Caco-2 (cell line): ENCODE measurements at regions of chr10 and their contacts with region 1.

Region 1: DNA sequence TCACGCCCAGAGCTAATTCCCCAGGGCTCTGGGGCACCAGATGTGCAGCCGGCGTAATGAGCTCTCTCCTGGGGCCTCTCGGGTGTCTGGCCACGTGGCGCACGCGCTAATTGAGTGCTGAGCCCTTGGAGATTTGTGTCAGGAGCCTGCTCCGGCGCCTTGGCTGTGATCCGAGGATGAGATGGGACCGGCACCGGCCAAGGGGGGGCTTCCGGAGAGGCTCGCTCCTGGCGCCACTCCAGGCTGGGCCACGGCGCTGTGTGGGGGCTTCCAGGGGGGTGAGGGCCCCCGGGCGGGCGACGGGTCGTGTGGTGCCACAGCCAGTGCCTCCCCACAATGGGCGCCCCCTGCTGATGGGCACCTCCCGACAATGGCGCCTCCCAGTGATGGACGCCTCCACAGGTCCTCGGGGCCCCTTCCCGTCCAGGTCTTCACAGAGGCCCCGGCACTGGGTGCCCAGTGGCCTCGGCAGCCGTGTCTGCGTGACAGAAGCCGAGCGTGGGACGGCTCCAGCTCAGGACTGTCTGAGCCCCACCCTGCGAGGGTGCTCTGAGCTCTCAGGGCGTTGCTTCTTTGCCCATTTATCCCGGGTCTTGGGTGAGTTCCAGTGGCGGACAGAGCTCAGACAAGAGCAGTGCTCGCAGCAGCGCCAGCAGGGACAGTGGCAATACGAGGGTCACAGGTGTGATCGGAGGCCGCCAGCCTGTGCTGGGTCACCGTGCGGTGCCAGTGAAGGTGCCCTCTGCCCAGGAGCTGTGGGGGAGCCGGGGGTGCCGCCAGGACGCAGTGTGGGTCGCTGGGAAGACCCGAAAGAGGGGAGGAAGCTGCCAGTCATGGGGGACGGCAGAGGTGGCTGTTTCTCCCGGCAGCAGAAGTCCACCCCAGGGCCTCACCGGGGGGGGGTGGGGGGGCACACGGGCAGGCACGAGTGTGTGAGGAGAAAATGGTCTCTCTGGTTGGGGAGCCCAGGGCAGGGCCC is 8.2 kb upstream of the NKX6-2 start:
- DNase-seq: peak in 1 of 2 experiments; percentile 25
- H3K4me3 ChIP-seq: no peak overlapping the region
- H3K4me3 Mint-ChIP-seq: no peak overlapping the region
- H3K27ac Mint-ChIP-seq: no peak overlapping the region
- H3K4me1 ChIP-seq: no peaks in the 10 kb centered on the region
- H3K4me1 Mint-ChIP-seq: no peaks in the 10 kb centered on the region
- H3K27me3 ChIP-seq: no peaks in the 10 kb centered on the region; the same call in 1 of the 2 replicates
- H3K27me3 Mint-ChIP-seq: peaks cover 3% of the 10 kb centered on the region
- CTCF ChIP-seq: no peak

Region 2: GRCh38 chr10:132536971-132537712 is 257.0 kb before region 1 on chr10:
- CTCF ChIA-PET with region 1: no interaction called
- POLR2A ChIA-PET with region 1: no interaction called
- intact Hi-C with region 1: no loop called
- DNase-seq: peak; percentile 99 to 100
- H3K4me3 ChIP-seq: peak overlapping the region; percentile 92
- H3K4me3 Mint-ChIP-seq: peak overlapping the region; percentile 87
- H3K27ac Mint-ChIP-seq: peak overlapping the region; percentile 39
- H3K4me1 ChIP-seq: peaks cover 25% of the 10 kb centered on the region
- H3K4me1 Mint-ChIP-seq: peaks cover 28% of the 10 kb centered on the region
- H3K27me3 ChIP-seq: no peaks in the 10 kb centered on the region
- H3K27me3 Mint-ChIP-seq: no peaks in the 10 kb centered on the region
- CTCF ChIP-seq: peak in 1 of 2 experiments; percentile 41

Region 3: GRCh38 chr10:132654702-132655661 is 139.2 kb before region 1 on chr10:
- CTCF ChIA-PET with region 1: no interaction called
- POLR2A ChIA-PET with region 1: no interaction called
- intact Hi-C with region 1: loop called (anchors 5 kb)
- DNase-seq: peak in 1 of 2 experiments; percentile 66
- H3K4me3 ChIP-seq: no peak overlapping the region
- H3K4me3 Mint-ChIP-seq: no peak overlapping the region
- H3K27ac Mint-ChIP-seq: no peak overlapping the region
- H3K4me1 ChIP-seq: no peaks in the 10 kb centered on the region
- H3K4me1 Mint-ChIP-seq: no peaks in the 10 kb centered on the region
- H3K27me3 ChIP-seq: no peaks in the 10 kb centered on the region
- H3K27me3 Mint-ChIP-seq: no peaks in the 10 kb centered on the region
- CTCF ChIP-seq: peak; percentile 92